Left cardiac atrium (tissue), 4 donors: ENCODE measurements at regions of chr3 and their contacts with region 1.

Region 1: GRCh38 chr3:66138336-66139313 is 82.2 kb upstream of the SLC25A26 start:
- DNase-seq: peak; percentile 35
- ATAC-seq: peak; percentile 89 to 91

Region 2: GRCh38 chr3:66053550-66054094 is 85.0 kb before region 1 on chr3:
- intact Hi-C with region 1: loop called in 1 of 2 experiments (anchors 10 kb)
- DNase-seq: peak; percentile 30
- ATAC-seq: peak; percentile 88 to 90